BJ (cell line): ENCODE measurements at regions of chr15 and their contacts with region 1.

Region 1: DNA sequence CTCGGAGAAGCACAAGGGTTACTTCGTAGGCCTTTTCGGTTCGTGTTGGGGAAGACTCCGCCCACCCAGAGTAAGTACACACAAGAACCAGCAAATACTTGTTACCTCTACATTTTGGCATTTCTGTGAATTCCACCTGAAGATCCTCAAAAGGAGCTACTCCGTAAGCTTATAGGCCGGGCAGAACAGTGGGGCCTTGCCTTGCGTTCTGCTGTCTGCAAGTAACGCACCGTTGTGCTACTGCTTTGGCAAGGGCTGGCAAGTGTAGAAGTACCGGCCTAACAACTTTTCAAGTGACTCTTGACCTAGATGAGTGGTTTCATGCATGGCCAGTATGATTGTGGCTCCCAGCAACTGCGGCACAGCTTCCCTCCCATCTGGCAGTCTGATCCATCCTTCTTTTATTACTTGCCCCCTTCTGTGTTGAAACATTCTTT is 6.4 kb upstream of the DNAAF4 start:
- DNase-seq: no peak
- H3K4me3 ChIP-seq: no peak overlapping the region
- H3K27me3 ChIP-seq: no peaks in the 10 kb centered on the region
- CTCF ChIP-seq: no peak

Region 2: DNA sequence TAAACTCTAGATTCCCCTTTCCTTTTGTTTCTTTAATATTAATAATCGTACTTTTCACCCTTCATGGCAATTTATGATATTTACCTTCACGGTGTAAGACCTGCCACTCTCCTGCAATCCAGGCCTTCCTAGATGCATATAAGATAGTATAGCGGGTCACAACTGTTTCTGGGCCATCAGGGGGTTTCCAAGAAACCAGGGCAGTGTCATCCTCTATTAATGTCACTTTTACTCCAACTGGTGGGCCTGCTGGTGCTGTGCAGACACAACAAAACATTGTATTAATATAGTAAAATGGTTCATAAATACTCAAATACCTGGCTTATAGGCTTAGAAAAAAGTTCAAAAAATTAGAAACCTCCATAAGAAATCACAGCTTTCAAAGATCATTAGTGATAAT is 122.7 kb after region 1 on chr15:
- CTCF ChIA-PET with region 1: interaction called, 12 read pairs
- POLR2A ChIA-PET with region 1: no interaction called
- DNase-seq: no peak
- H3K4me3 ChIP-seq: no peak overlapping the region
- H3K27me3 ChIP-seq: no peaks in the 10 kb centered on the region
- CTCF ChIP-seq: no peak